Calu3 (cell line): ENCODE measurements at regions of chr5 and their contacts with region 1.

Region 1: GRCh38 chr5:39080597-39081204 is 6.5 kb upstream of the RICTOR start:
- DNase-seq: peak; percentile 66
- H3K4me3 Mint-ChIP-seq: no peak overlapping the region
- H3K27ac Mint-ChIP-seq: peak overlapping the region; percentile 20
- H3K4me1 Mint-ChIP-seq: peaks cover 11% of the 10 kb centered on the region
- H3K27me3 Mint-ChIP-seq: no peaks in the 10 kb centered on the region
- CTCF ChIP-seq: peak; percentile 70

Region 2: DNA sequence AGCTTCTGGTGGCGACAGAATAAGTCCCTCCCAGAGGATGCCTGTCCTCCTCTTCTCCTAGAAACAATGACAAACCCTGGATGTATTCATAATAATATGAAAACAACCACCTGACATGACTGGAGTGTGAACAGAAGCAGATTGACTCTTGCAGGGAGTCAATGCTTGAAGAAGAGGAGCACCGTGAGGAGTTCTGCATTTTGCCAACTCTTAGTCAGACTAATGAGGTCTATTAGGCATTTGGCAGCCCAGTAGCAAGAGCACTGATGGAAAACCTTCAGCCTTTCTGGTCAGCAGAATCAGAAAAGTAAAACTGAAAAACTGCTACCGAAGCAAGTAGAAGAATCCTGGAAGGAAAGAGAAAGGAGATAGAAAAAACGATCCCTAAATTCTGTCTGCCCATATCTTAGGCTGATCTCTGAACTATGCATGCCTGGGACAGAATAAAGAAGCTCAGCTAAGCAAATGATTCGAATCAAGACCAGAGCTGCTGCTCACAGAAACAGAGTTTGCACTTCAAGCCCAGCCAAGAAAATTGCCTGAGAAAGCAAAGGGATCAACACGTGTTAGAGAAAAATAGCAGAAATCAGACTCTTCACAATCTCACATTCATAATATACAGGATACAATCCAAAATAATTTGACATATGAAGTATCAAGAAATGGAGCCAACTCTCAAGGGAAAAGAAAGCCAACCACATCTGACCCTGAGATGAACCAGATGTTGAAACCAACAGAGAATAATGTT is 304.4 kb before region 1 on chr5:
- CTCF ChIA-PET with region 1: no interaction called
- intact Hi-C with region 1: no loop called
- DNase-seq: no peak
- H3K4me3 Mint-ChIP-seq: no peak overlapping the region
- H3K27ac Mint-ChIP-seq: no peak overlapping the region
- H3K4me1 Mint-ChIP-seq: no peaks in the 10 kb centered on the region
- H3K27me3 Mint-ChIP-seq: peaks cover 80% of the 10 kb centered on the region
- CTCF ChIP-seq: no peak

Region 3: DNA sequence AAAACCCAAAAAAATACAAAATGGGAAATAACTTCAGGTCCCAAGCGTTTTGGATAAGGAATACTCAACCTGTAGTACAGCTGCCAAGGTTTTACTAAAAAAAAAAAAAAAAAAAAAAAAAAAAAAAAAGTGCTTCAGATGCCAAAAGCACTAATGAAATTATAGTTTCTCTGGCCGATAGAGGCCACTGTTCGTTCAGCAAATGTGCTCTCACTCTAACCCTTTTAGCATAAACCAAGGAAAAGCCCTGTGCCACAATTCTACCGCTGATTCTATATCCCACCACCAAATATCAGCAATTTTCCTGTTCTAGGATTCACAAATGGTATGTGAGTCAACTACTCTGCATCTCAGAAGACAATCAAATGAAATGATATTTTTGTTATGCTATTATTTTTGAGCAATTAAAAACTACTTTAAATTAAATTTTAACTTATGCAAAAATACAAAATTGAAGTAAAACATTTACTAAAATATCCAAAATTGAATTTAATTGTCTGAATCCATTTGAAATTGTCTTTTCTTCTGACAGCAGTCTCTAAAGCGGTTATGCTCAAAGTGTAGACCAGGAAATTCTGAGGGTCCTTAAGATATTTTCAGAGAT is 86.3 kb before region 1 on chr5:
- CTCF ChIA-PET with region 1: no interaction called
- intact Hi-C with region 1: loop called (anchors 2 kb)
- DNase-seq: peak; percentile 37
- H3K4me3 Mint-ChIP-seq: no peak overlapping the region
- H3K27ac Mint-ChIP-seq: no peak overlapping the region
- H3K4me1 Mint-ChIP-seq: no peaks in the 10 kb centered on the region
- H3K27me3 Mint-ChIP-seq: no peaks in the 10 kb centered on the region
- CTCF ChIP-seq: no peak

Region 4: GRCh38 chr5:39005566-39006232 is 75.0 kb before region 1 on chr5:
- CTCF ChIA-PET with region 1: interaction called, 8 read pairs
- intact Hi-C with region 1: loop called (anchors 5 kb)
- DNase-seq: peak; percentile 12
- H3K4me3 Mint-ChIP-seq: no peak overlapping the region
- H3K27ac Mint-ChIP-seq: peak overlapping the region; percentile 30
- H3K4me1 Mint-ChIP-seq: no peaks in the 10 kb centered on the region
- H3K27me3 Mint-ChIP-seq: no peaks in the 10 kb centered on the region
- CTCF ChIP-seq: no peak

Region 5: DNA sequence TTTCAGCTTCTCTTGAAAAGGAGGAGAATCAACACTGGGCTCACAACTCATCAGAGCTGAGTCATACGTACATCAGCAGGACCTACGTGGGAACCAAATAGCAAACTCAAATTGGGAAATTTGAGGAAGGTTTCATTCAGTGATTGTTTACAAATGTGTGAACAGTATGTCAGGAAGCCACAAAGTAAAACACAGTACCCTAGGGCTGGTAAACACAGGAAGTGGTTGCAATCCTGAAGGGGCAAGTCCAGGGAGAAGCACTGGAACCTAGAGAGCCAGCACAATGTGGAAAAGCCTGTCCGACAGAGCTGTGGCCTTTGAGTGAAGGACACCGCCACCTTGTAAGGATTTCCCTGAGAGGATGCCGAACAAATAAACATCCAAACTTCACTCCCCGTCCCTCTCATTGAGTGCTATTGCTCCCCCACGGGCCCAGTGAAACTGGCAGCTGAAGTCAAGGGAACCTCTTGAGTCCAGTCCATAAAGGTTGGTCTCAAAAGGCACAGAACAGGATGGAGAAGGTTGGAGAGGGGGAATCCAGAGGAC is 20.2 kb after region 1 on chr5:
- CTCF ChIA-PET with region 1: interaction called, 10 read pairs
- intact Hi-C with region 1: loop called (anchors 2 kb)
- DNase-seq: peak; percentile 65
- H3K4me3 Mint-ChIP-seq: no peak overlapping the region
- H3K27ac Mint-ChIP-seq: peak overlapping the region; percentile 33
- H3K4me1 Mint-ChIP-seq: peaks cover 55% of the 10 kb centered on the region
- H3K27me3 Mint-ChIP-seq: no peaks in the 10 kb centered on the region
- CTCF ChIP-seq: no peak

Region 6: DNA sequence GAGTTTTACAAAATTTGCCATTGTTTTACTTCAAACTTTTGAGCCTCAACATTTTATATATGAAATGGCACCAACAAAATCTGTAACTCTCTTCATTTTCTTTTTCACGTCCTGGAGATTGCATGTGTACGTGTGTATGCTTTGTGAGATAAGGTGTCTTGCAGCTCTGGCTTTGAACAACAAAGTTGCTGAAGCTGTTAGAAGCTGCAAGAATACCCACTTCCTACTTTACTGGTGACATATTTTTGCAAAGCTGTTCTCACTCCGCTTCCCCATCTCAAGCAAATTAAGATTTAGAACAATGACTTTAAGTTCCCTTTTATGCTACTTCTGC is 96.9 kb after region 1 on chr5:
- CTCF ChIA-PET with region 1: no interaction called
- intact Hi-C with region 1: no loop called
- DNase-seq: no peak
- H3K4me3 Mint-ChIP-seq: no peak overlapping the region
- H3K27ac Mint-ChIP-seq: no peak overlapping the region
- H3K4me1 Mint-ChIP-seq: peaks cover 45% of the 10 kb centered on the region
- H3K27me3 Mint-ChIP-seq: no peaks in the 10 kb centered on the region
- CTCF ChIP-seq: no peak